ENCODE measurements at regions of chr5 and their contacts with region 1.

Region 1: GRCh38 chr5:151093476-151093889 is 12.6 kb upstream of the TNIP1 start:
- DNase-seq: peak in 1 of 2 donors; percentile 62
- ATAC-seq: peak in 2 of 3 donors; percentile 11 to 40
- H3K4me3 ChIP-seq: no peak overlapping the region
- H3K4me3 Mint-ChIP-seq: peak overlapping the region; percentile 85
- H3K27ac ChIP-seq: peak overlapping the region; percentile 87
- H3K27ac Mint-ChIP-seq: peak overlapping the region; percentile 87 to 97
- H3K4me1 ChIP-seq: peaks cover 65% of the 10 kb centered on the region
- H3K4me1 Mint-ChIP-seq: peaks cover 67 to 68% of the 10 kb centered on the region in 2 donors
- H3K27me3 ChIP-seq: no peaks in the 10 kb centered on the region
- H3K27me3 Mint-ChIP-seq: no peaks in the 10 kb centered on the region
- CTCF ChIP-seq: peak; percentile 32

Region 2: DNA sequence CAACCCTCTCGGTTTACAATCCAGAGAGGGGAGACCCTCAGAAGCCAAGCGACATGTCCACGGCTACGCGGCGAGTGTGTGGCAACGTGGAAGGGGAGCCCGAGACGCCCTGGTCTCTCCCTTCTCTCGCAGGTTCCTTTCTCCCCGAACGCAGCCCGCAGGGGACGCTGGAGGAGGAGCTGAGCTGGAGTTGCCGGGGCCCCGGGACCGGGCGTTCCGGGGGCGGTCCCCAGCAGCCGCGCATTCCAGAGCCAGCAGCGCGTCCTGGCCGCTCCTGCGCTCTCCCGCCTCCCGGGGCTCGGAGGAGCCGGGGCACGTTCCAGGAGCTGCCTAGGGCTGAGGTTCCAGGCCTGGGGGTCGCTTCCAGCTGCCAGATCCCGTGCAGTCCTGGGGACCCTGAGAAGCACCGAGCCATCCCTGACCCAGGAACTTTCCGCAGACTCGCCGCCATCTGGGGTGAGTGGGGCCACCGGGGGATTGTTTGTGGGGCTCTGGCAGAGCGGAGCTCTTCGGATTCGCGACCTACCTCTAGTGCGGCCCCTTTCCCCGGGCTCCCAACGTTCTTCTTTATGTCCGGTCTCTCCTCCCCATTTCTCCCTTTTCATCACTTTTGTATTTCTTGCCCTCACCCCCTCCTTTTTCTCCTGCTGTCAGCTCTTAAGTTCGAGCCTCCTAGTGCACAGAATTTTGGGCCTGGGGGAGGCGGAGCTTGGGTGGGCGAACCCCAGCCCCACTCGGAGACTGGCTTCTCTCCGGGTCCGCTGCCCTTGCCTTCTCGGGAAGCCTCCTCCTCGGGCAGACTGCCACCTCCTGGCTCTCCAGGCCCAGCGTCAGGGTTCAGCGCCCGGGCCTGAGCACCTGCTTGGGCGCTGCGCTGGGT is 314.7 kb before region 1 on chr5 and contains the start of gene SMIM3:
- intact Hi-C with region 1: loop called (anchors 10 kb)
- DNase-seq: peak; percentile 53 to 79
- ATAC-seq: peak; percentile 59 to 72 (median 65)
- H3K4me3 ChIP-seq: peak within 1 kb of the TSS; percentile 80
- H3K4me3 Mint-ChIP-seq: peak within 1 kb of the TSS; percentile 91
- H3K27ac ChIP-seq: peak within 1 kb of the TSS; percentile 54
- H3K27ac Mint-ChIP-seq: peak within 1 kb of the TSS; percentile 47 to 93
- H3K4me1 ChIP-seq: peaks cover 45% of the 10 kb centered on the region
- H3K4me1 Mint-ChIP-seq: peaks cover 51 to 56% of the 10 kb centered on the region in 2 donors
- H3K27me3 ChIP-seq: no peaks in the 10 kb centered on the region
- H3K27me3 Mint-ChIP-seq: peaks cover 0 to 8% of the 10 kb centered on the region in 2 donors
- CTCF ChIP-seq: peak; percentile 19
- total RNA-seq, gene SMIM3: 7.0 to 9.4 (median 8.9) TPM

Region 3: DNA sequence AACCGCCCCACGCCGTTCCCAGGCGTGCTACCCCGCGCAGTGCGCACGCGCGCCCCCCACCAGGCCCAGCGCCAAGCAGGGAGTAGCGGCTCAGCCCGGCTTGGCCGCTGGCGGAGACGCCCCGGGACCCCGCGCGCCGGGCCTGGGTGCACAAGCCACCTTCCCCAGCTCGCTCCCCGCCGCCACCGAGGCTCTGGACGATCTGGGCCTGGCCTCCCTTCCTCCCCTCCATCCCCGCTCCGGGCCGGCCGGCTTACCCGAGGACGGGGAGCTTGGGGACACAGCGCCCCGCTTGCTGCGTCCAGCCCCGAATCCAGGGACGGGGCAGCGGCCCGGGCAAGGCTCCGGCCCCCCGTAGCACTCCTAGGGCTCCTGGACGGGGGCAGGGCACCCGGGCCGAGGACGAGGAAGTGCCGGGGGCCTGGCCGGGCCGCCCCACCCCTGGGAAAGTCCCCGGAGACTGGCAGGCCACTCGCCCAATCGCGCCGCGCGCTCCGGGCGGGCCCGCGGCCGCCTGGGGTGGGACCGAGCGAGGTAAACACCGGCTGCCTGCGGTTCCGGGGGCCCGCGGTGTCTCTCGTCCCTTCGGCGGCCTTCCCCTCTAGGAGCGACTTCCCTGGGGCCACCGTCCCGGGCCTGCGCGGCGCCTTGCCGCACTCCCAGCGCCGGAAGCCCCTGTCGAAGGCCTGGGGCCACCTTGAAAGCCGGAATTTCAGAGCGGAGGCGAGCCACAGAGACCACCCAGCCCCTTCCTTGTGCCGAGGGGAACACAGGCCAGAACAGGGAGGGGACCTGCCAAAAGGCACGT is 12.7 kb before region 1 on chr5 and contains the start of gene TNIP1:
- intact Hi-C with region 1: loop called (anchors 1 kb)
- DNase-seq: peak; percentile 96
- ATAC-seq: peak; percentile 88 to 97 (median 92)
- H3K4me3 ChIP-seq: peak within 1 kb of the TSS; percentile 76
- H3K4me3 Mint-ChIP-seq: peak within 1 kb of the TSS; percentile 93
- H3K27ac ChIP-seq: peak within 1 kb of the TSS; percentile 94
- H3K27ac Mint-ChIP-seq: peak within 1 kb of the TSS; percentile 93 to 95
- H3K4me1 ChIP-seq: peaks cover 61% of the 10 kb centered on the region
- H3K4me1 Mint-ChIP-seq: peaks cover 52 to 54% of the 10 kb centered on the region in 2 donors
- H3K27me3 ChIP-seq: no peaks in the 10 kb centered on the region
- H3K27me3 Mint-ChIP-seq: no peaks in the 10 kb centered on the region
- CTCF ChIP-seq: no peak
- total RNA-seq, gene TNIP1: 140 to 180 (median 153) TPM

Region 4: DNA sequence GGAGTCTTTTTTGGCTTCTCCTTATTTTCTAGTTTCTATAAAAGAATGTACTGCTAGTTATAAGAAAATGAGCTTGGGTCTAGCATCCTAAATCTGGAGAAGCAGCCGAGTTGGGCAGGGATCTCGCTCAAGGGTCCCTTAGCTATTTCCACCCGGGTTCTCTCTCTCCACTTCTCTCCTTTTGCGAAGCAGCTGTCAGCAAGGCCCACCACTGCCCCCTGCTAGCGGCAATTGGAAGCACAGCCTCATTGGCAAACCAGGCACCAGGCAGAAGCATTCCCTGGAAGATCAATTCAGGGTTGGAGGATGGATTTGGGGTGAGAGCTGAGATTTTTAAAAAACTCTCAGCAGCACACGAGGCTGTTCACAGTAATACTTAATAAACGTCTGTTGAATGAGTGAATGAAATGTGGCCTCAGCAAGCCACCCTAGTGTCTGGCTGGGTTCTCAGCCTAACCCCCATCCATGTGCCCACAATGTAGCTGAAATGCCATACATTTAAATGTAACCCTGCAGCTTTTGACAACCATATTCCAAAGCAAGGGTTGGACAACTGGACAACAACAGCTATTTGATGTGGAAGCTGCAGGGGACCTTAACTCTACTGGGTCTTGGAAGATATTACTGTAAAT is 21.9 kb after region 1 on chr5:
- intact Hi-C with region 1: loop called (anchors 2 kb)
- DNase-seq: peak; percentile 68 to 84
- ATAC-seq: peak; percentile 85 to 98 (median 93)
- H3K4me3 ChIP-seq: no peak overlapping the region
- H3K4me3 Mint-ChIP-seq: no peak overlapping the region
- H3K27ac ChIP-seq: no peak overlapping the region
- H3K27ac Mint-ChIP-seq: peak overlapping the region in 1 of 2 donors; percentile 82
- H3K4me1 ChIP-seq: peaks cover 5% of the 10 kb centered on the region
- H3K4me1 Mint-ChIP-seq: peaks cover 9 to 15% of the 10 kb centered on the region in 2 donors
- H3K27me3 ChIP-seq: no peaks in the 10 kb centered on the region
- H3K27me3 Mint-ChIP-seq: no peaks in the 10 kb centered on the region
- CTCF ChIP-seq: peak; percentile 93

Region 5: DNA sequence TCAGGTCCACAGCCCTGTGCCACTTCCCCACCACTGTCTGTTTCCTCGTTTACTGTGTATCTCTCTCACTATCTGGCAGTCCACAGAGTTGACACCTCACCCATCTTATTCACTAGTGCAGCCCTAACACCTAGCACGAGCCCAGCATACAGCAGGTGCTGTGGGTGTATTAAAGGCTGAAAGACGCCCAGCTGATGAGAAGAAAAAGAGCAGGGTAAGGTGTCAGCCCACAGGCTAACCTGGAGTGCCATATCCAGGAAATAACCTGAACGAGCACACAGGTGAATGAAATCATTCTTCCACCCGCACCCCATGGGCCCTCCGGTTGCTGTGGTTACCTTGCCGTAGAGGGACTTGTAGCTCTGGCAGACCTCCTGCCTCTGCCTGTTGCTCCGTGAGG is 45.5 kb after region 1 on chr5:
- intact Hi-C with region 1: loop called (anchors 5 kb)
- DNase-seq: peak; percentile 56 to 72
- ATAC-seq: peak; percentile 85 to 95 (median 94)
- H3K4me3 ChIP-seq: no peak overlapping the region
- H3K4me3 Mint-ChIP-seq: peak overlapping the region; percentile 53
- H3K27ac ChIP-seq: peak overlapping the region; percentile 83
- H3K27ac Mint-ChIP-seq: peak overlapping the region; percentile 80 to 95
- H3K4me1 ChIP-seq: peaks cover 67% of the 10 kb centered on the region
- H3K4me1 Mint-ChIP-seq: peaks cover 67 to 90% of the 10 kb centered on the region in 2 donors
- H3K27me3 ChIP-seq: no peaks in the 10 kb centered on the region
- H3K27me3 Mint-ChIP-seq: no peaks in the 10 kb centered on the region
- CTCF ChIP-seq: no peak

Region 6: DNA sequence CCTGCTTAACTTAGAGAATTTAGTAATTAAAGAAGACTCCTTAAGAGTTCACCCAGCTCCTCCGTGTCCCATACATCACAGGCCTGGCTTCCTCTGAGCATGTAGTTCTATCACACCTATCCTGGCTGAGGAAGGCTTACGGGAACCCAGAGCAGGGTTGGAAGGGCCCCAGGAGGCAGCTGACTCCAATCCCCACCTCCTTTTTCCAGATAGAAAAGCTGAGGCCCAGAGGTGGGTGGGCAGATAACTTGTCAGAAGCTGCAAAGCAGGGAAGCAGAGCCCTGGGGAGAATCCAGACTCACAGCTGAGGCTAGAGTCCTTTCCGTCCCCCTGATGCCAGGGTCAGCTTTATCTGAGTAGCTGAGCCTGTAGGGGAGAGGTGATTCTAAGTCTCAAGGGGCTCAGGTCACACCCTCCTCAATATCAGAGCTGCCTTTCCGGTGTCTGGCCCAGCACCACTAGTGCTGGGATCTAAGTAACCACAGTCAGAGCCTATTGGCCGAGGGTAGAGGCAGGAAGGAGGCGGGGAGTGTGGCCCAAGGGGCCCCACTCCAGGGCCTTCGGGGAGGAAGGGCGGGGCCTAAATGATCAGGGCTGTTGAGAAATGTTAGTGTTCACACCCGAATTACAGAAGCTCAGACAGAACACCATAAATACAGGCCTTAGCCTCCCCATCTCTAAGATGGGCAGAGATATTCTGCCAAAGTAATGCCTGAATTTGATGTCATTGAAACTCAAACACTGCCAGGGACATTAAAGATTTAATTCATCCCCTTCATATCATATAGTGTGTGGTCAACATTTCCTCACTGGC is 120.5 kb after region 1 on chr5:
- intact Hi-C with region 1: loop called (anchors 5 kb)
- DNase-seq: peak; percentile 77 to 93
- ATAC-seq: peak; percentile 86 to 97 (median 91)
- H3K4me3 ChIP-seq: peak overlapping the region; percentile 48
- H3K4me3 Mint-ChIP-seq: peak overlapping the region; percentile 88
- H3K27ac ChIP-seq: peak overlapping the region; percentile 97
- H3K27ac Mint-ChIP-seq: peak overlapping the region; percentile 88 to 92
- H3K4me1 ChIP-seq: peaks cover 99% of the 10 kb centered on the region
- H3K4me1 Mint-ChIP-seq: peaks cover 80 to 81% of the 10 kb centered on the region in 2 donors
- H3K27me3 ChIP-seq: no peaks in the 10 kb centered on the region
- H3K27me3 Mint-ChIP-seq: no peaks in the 10 kb centered on the region
- CTCF ChIP-seq: no peak